T-cell (primary cell): ENCODE measurements at regions of chr16 and their contacts with region 1.

Region 1: DNA sequence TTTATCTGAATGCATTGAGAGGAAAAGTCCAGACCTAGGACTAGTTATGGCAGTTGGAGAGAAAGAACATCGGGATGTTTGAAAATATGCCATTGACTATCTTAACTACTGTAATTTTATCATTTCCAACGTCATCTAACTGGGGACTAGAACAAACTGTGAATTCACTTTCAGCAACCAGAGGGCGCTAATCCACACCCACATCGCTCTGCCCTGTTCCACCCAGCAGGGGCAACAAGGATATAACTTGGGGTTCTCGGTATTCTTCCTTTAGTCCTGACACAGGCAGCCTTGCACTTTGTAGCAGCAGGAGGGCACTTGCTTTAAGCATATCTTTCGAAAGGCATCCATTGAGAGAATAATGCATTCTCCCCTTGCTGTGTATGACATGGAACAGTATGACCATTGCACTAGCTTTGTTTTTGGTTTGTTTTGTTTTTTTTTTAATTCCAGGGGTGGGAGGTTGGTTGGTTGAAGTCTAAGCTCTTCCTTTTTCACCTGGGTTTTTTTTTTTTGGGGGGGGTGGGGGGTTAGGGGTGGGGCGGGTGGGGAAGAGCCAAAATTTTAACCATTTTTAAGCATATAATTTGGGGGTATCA is 31.5 kb downstream of the SIAH1 start:
- DNase-seq: peak; percentile 30 to 87 (median 67)
- ATAC-seq: peak; percentile 88 to 94 (median 92)
- H3K4me3 ChIP-seq: no peak overlapping the region
- H3K4me3 Mint-ChIP-seq: no peak overlapping the region
- H3K27ac ChIP-seq: no peak overlapping the region
- H3K27ac Mint-ChIP-seq: peak overlapping the region; percentile 56 to 73
- H3K4me1 ChIP-seq: peaks cover 2 to 3% of the 10 kb centered on the region in 2 experiments
- H3K4me1 Mint-ChIP-seq: peaks cover 7 to 10% (median 10%) of the 10 kb centered on the region in 3 donors
- H3K27me3 ChIP-seq: no peaks in the 10 kb centered on the region
- H3K27me3 Mint-ChIP-seq: no peaks in the 10 kb centered on the region

Region 2: DNA sequence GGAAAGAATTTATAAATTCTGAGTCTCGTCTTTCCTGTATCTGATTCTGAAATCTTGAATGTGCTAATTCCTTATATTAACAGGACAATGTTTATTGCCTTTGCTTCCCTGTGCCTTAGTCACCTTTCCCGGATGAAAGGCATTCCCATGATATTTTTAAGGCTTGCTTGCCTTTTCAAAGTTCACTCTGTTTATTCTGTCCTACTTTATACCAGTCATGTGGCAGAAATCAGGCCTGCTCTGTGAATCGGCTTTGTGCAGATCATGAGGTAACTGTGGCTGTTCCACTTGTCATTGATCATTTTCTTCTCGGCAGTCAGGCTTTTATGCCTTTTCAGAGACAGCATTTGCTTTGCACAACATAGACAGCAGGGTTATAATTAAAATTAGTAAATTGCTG is 77.6 kb before region 1 on chr16:
- CTCF ChIA-PET with region 1: no interaction called
- POLR2A ChIA-PET with region 1: no interaction called
- DNase-seq: no peak
- ATAC-seq: no peak
- H3K4me3 ChIP-seq: no peak overlapping the region
- H3K4me3 Mint-ChIP-seq: no peak overlapping the region
- H3K27ac ChIP-seq: no peak overlapping the region
- H3K27ac Mint-ChIP-seq: no peak overlapping the region
- H3K4me1 ChIP-seq: no peaks in the 10 kb centered on the region
- H3K4me1 Mint-ChIP-seq: peaks cover 10 to 27% (median 19%) of the 10 kb centered on the region in 3 donors
- H3K27me3 ChIP-seq: no peaks in the 10 kb centered on the region
- H3K27me3 Mint-ChIP-seq: no peaks in the 10 kb centered on the region

Region 3: GRCh38 chr16:48365581-48366164 is 12.0 kb after region 1 on chr16:
- CTCF ChIA-PET with region 1: interaction called in 1 of 2 experiments, 10 read pairs
- POLR2A ChIA-PET with region 1: interaction called in 1 of 2 experiments, 7 read pairs
- DNase-seq: peak; percentile 46 to 78 (median 64)
- ATAC-seq: peak; percentile 90 to 95 (median 94)
- H3K4me3 ChIP-seq: peak overlapping the region; percentile 66 to 79
- H3K4me3 Mint-ChIP-seq: peak overlapping the region; percentile 80 to 93 (median 87)
- H3K27ac ChIP-seq: peak overlapping the region; percentile 87
- H3K27ac Mint-ChIP-seq: peak overlapping the region; percentile 89 to 97
- H3K4me1 ChIP-seq: peaks cover 15 to 17% of the 10 kb centered on the region in 2 experiments
- H3K4me1 Mint-ChIP-seq: peaks cover 44 to 63% (median 48%) of the 10 kb centered on the region in 3 donors
- H3K27me3 ChIP-seq: no peaks in the 10 kb centered on the region
- H3K27me3 Mint-ChIP-seq: no peaks in the 10 kb centered on the region

Region 4: DNA sequence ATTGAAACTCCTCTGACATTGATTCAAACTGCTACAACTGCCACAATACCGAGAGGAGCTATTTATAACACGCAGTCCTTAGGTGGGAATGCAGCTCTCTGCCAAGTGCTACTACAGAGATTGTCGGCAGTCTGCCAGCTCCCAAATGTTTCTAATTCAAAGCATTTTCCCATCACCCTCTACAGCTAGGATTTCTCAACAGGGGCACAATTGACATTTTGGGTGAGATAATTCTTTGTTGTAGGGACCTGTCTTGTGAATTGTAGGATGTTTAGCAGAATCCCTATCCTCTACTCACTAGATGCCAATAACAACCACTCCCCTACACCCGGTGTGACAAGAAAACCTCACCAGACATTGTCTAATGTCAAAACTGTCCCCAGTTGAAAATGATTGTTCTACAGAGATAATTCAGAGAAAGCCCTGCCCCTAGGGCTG is 264.1 kb after region 1 on chr16:
- CTCF ChIA-PET with region 1: interaction called, 14 to 77 read pairs
- POLR2A ChIA-PET with region 1: interaction called, 3 to 12 read pairs
- DNase-seq: no peak
- ATAC-seq: no peak
- H3K4me3 ChIP-seq: no peak overlapping the region
- H3K4me3 Mint-ChIP-seq: no peak overlapping the region
- H3K27ac ChIP-seq: no peak overlapping the region
- H3K27ac Mint-ChIP-seq: no peak overlapping the region
- H3K4me1 ChIP-seq: peaks cover 36 to 39% of the 10 kb centered on the region in 2 experiments
- H3K4me1 Mint-ChIP-seq: peaks cover 40 to 51% (median 45%) of the 10 kb centered on the region in 3 donors
- H3K27me3 ChIP-seq: peaks cover 0 to 6% of the 10 kb centered on the region in 2 experiments
- H3K27me3 Mint-ChIP-seq: no peaks in the 10 kb centered on the region